Naive thymus-derived CD4-positive, alpha-beta T cell (primary cell): ENCODE measurements at regions of chr18 and their contacts with region 1.

Region 1: DNA sequence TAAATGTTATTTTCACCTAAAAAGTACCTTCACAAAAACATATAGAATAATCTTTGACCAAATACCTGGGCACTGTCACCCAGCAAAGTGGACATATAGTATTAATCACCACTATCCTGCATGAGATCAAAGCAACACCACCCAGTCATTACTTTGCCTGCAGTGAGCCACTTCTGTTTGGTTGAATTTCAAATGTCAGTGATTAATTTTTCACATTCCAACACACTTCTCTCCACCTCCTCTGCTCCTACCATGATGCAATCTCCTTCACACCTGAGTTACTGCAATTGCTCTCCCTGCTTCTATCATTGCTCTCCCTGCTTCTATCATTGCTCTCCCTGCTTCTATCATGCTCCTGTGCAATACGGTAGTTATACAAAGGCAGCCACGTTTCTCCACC is 106.0 kb upstream of the NETO1 start:
- DNase-seq: no peak
- ATAC-seq: no peak
- H3K4me3 ChIP-seq: no peak overlapping the region
- H3K4me3 Mint-ChIP-seq: no peak overlapping the region
- H3K27ac ChIP-seq: no peak overlapping the region
- H3K27ac Mint-ChIP-seq: no peak overlapping the region
- H3K4me1 ChIP-seq: no peaks in the 10 kb centered on the region
- H3K4me1 Mint-ChIP-seq: no peaks in the 10 kb centered on the region
- H3K27me3 ChIP-seq: no peaks in the 10 kb centered on the region
- H3K27me3 Mint-ChIP-seq: no peaks in the 10 kb centered on the region

Region 2: DNA sequence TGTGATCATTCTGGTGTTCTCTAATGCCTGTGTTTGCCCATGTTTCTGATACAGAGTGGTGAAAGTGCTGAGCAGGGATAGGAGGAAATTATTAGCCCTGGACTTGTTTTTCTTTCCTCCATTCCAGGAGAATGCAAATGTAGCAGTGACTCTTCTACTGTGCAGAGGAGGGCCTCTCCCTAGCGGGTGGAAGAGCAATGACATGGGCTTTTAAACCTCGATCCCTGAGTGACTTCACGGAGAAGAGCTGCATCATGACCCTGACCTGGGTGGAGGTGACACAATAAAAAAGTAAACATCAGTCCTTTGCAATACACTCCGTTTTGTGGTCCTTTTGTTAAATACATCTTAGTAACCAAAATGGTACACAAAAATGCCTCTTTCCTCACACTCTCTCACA is 38.1 kb before region 1 on chr18:
- CTCF ChIA-PET with region 1: no interaction called
- POLR2A ChIA-PET with region 1: no interaction called
- intact Hi-C with region 1: loop called in 1 of 2 experiments (anchors 1 kb)
- DNase-seq: no peak
- ATAC-seq: no peak
- H3K4me3 ChIP-seq: no peak overlapping the region
- H3K4me3 Mint-ChIP-seq: no peak overlapping the region
- H3K27ac ChIP-seq: no peak overlapping the region
- H3K27ac Mint-ChIP-seq: no peak overlapping the region
- H3K4me1 ChIP-seq: no peaks in the 10 kb centered on the region
- H3K4me1 Mint-ChIP-seq: no peaks in the 10 kb centered on the region
- H3K27me3 ChIP-seq: no peaks in the 10 kb centered on the region
- H3K27me3 Mint-ChIP-seq: no peaks in the 10 kb centered on the region

Region 3: GRCh38 chr18:73270920-73271634 is 297.2 kb after region 1 on chr18:
- CTCF ChIA-PET with region 1: no interaction called
- POLR2A ChIA-PET with region 1: no interaction called
- intact Hi-C with region 1: no loop called
- DNase-seq: no peak
- ATAC-seq: no peak
- H3K4me3 ChIP-seq: no peak overlapping the region
- H3K4me3 Mint-ChIP-seq: no peak overlapping the region
- H3K27ac ChIP-seq: no peak overlapping the region
- H3K27ac Mint-ChIP-seq: no peak overlapping the region
- H3K4me1 ChIP-seq: no peaks in the 10 kb centered on the region
- H3K4me1 Mint-ChIP-seq: no peaks in the 10 kb centered on the region
- H3K27me3 ChIP-seq: no peaks in the 10 kb centered on the region
- H3K27me3 Mint-ChIP-seq: no peaks in the 10 kb centered on the region

Region 4: DNA sequence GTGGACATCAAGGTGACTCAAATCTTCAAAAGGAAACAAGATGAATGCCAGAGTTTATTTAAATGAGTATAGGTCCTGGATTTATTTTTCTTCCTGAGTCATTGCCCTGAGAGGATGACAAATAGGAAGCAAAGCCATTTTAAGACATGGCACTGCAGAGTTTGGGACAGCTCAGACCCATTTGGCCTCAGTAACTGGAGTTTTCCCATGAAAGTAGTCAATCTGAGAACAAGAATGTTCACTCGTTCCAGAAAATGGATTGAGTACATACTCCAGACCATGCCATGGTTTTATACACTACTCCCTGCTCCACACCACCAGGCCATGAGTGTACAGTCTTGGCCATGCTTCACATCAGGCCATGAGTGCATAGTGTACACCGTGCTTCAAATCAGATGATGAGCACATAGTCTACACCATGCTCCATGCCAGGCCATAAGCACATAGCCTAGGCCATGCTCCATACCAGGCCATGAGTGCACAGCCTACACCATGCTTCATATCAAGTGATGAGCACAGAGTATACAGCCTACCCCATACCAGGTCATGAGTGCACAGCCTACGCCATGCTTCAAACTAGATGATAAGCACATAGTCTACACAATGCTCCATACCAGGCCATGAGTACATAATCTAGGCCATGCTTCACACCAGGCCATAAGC is 971.4 kb after region 1 on chr18:
- CTCF ChIA-PET with region 1: no interaction called
- POLR2A ChIA-PET with region 1: no interaction called
- intact Hi-C with region 1: no loop called
- DNase-seq: no peak
- ATAC-seq: peak; percentile 34
- H3K4me3 ChIP-seq: no peak overlapping the region
- H3K4me3 Mint-ChIP-seq: no peak overlapping the region
- H3K27ac ChIP-seq: no peak overlapping the region
- H3K27ac Mint-ChIP-seq: peak overlapping the region in 1 of 9 donors; percentile 43
- H3K4me1 ChIP-seq: no peaks in the 10 kb centered on the region
- H3K4me1 Mint-ChIP-seq: no peaks in the 10 kb centered on the region
- H3K27me3 ChIP-seq: no peaks in the 10 kb centered on the region
- H3K27me3 Mint-ChIP-seq: peaks cover 0 to 14% (median under 1%) of the 10 kb centered on the region in 5 donors